ENCODE measurements at regions of chr17 and their contacts with region 1.

Region 1: GRCh38 chr17:82863941-82864774 is 24.3 kb upstream of the ZNF750 start:
- DNase-seq: peak; percentile 77 to 95
- ATAC-seq: peak; percentile 80 to 89 (median 88)
- H3K4me3 ChIP-seq: no peak overlapping the region
- H3K4me3 Mint-ChIP-seq: peak overlapping the region; percentile 85
- H3K27ac ChIP-seq: peak overlapping the region; percentile 75
- H3K27ac Mint-ChIP-seq: peak overlapping the region; percentile 96 to 98
- H3K4me1 ChIP-seq: peaks cover 78% of the 10 kb centered on the region
- H3K4me1 Mint-ChIP-seq: peaks cover 59 to 63% of the 10 kb centered on the region in 2 donors
- H3K27me3 ChIP-seq: no peaks in the 10 kb centered on the region
- H3K27me3 Mint-ChIP-seq: no peaks in the 10 kb centered on the region
- CTCF ChIP-seq: no peak

Region 2: GRCh38 chr17:82804442-82805191 is 59.5 kb before region 1 on chr17:
- intact Hi-C with region 1: no loop called
- DNase-seq: no peak
- ATAC-seq: no peak
- H3K4me3 ChIP-seq: no peak overlapping the region
- H3K4me3 Mint-ChIP-seq: no peak overlapping the region
- H3K27ac ChIP-seq: no peak overlapping the region
- H3K27ac Mint-ChIP-seq: no peak overlapping the region
- H3K4me1 ChIP-seq: no peaks in the 10 kb centered on the region
- H3K4me1 Mint-ChIP-seq: peaks cover 6 to 22% of the 10 kb centered on the region in 2 donors
- H3K27me3 ChIP-seq: no peaks in the 10 kb centered on the region
- H3K27me3 Mint-ChIP-seq: no peaks in the 10 kb centered on the region
- CTCF ChIP-seq: no peak

Region 3: DNA sequence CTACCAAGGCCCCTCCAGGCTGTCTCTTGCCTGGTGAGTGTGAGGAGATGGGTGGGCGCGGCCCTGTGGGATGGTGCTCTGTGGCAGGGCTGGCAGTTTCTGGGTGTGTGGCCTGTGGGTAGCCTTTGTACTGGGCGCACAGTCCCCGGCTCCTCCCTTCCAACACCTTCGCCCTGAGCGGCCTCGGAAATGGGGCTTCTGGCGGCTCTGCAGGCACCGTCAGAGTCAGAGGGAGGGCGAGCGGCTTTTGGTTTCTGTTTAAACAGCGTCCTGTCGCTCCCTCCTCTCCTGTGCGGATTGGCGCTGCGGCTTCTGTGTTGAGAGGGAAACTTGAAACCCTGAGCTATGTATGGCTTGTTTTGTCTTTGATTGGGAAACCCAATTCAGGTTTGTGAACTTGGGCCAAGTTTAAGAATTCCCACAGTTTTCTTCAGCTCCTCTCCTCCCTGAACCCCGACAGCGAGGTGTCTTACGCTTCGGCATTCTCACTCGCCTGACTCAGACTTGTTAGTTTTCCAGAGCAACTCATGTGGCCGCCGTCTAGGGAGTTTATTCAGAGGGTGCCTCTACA is 16.1 kb before region 1 on chr17:
- intact Hi-C with region 1: loop called (anchors 1 kb)
- DNase-seq: peak; percentile 74 to 75
- ATAC-seq: peak; percentile 94 to 98 (median 95)
- H3K4me3 ChIP-seq: peak overlapping the region; percentile 31
- H3K4me3 Mint-ChIP-seq: peak overlapping the region; percentile 83
- H3K27ac ChIP-seq: peak overlapping the region; percentile 75
- H3K27ac Mint-ChIP-seq: peak overlapping the region; percentile 88 to 92
- H3K4me1 ChIP-seq: peaks cover 24% of the 10 kb centered on the region
- H3K4me1 Mint-ChIP-seq: peaks cover 19 to 32% of the 10 kb centered on the region in 2 donors
- H3K27me3 ChIP-seq: no peaks in the 10 kb centered on the region
- H3K27me3 Mint-ChIP-seq: no peaks in the 10 kb centered on the region
- CTCF ChIP-seq: no peak

Region 4: GRCh38 chr17:82881900-82882714 is 17.9 kb after region 1 on chr17:
- intact Hi-C with region 1: loop called (anchors 1 kb)
- DNase-seq: no peak
- ATAC-seq: no peak
- H3K4me3 ChIP-seq: no peak overlapping the region
- H3K4me3 Mint-ChIP-seq: peak overlapping the region; percentile 83
- H3K27ac ChIP-seq: peak overlapping the region; percentile 59
- H3K27ac Mint-ChIP-seq: peak overlapping the region; percentile 87 to 88
- H3K4me1 ChIP-seq: peaks cover 83% of the 10 kb centered on the region
- H3K4me1 Mint-ChIP-seq: peaks cover 69 to 85% of the 10 kb centered on the region in 2 donors
- H3K27me3 ChIP-seq: no peaks in the 10 kb centered on the region
- H3K27me3 Mint-ChIP-seq: peaks cover 0 to 10% of the 10 kb centered on the region in 2 donors
- CTCF ChIP-seq: no peak

Region 5: GRCh38 chr17:82892899-82893565 is 28.9 kb after region 1 on chr17:
- intact Hi-C with region 1: loop called (anchors 1 kb)
- DNase-seq: peak; percentile 76 to 91
- ATAC-seq: peak; percentile 92 to 99 (median 93)
- H3K4me3 ChIP-seq: no peak overlapping the region
- H3K4me3 Mint-ChIP-seq: peak overlapping the region; percentile 68
- H3K27ac ChIP-seq: peak overlapping the region; percentile 61
- H3K27ac Mint-ChIP-seq: peak overlapping the region; percentile 82 to 83
- H3K4me1 ChIP-seq: peaks cover 29% of the 10 kb centered on the region
- H3K4me1 Mint-ChIP-seq: peaks cover 31 to 36% of the 10 kb centered on the region in 2 donors
- H3K27me3 ChIP-seq: no peaks in the 10 kb centered on the region
- H3K27me3 Mint-ChIP-seq: peaks cover 0 to 7% of the 10 kb centered on the region in 2 donors
- CTCF ChIP-seq: no peak

Region 6: GRCh38 chr17:83051395-83052233 is 187.5 kb after region 1 on chr17:
- intact Hi-C with region 1: loop called (anchors 10 kb)
- DNase-seq: peak; percentile 97 to 99
- ATAC-seq: peak; percentile 79 to 96 (median 80)
- H3K4me3 ChIP-seq: peak overlapping the region; percentile 35
- H3K4me3 Mint-ChIP-seq: peak overlapping the region; percentile 93
- H3K27ac ChIP-seq: peak overlapping the region; percentile 97
- H3K27ac Mint-ChIP-seq: peak overlapping the region; percentile 88 to 92
- H3K4me1 ChIP-seq: peaks cover 57% of the 10 kb centered on the region
- H3K4me1 Mint-ChIP-seq: peaks cover 31 to 50% of the 10 kb centered on the region in 2 donors
- H3K27me3 ChIP-seq: no peaks in the 10 kb centered on the region
- H3K27me3 Mint-ChIP-seq: no peaks in the 10 kb centered on the region
- CTCF ChIP-seq: no peak

Measured in natural killer cell (primary cell).